Breast epithelium (tissue), 4 donors: ENCODE measurements at regions of chr1 and their contacts with region 1.

Region 1: DNA sequence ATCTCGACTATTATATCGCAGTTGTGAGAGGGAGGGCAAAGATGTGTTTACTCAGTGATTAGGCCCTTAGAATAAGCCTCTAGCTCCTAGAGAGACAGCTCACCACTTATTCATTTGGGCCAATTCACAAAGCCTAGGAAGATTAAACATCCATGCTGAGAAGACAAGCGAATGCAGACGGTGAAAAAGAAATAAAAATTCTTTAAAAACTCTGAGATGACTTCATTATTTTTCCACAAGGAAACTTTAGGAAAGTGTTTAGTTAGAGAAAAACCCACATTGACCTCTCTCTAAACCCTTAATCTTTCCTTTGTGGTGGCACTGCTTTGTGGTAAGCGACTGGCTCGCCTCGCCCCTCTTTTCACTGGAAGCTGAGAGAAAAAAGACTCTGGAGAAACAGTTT is 146.8 kb upstream of the DMRTA2 start:
- DNase-seq: no peak
- H3K4me3 ChIP-seq: no peak overlapping the region
- H3K27ac ChIP-seq: no peak overlapping the region
- H3K4me1 ChIP-seq: no peaks in the 10 kb centered on the region
- H3K27me3 ChIP-seq: no peaks in the 10 kb centered on the region
- CTCF ChIP-seq: no peak
- POLR2A ChIP-seq: no peak

Region 2: DNA sequence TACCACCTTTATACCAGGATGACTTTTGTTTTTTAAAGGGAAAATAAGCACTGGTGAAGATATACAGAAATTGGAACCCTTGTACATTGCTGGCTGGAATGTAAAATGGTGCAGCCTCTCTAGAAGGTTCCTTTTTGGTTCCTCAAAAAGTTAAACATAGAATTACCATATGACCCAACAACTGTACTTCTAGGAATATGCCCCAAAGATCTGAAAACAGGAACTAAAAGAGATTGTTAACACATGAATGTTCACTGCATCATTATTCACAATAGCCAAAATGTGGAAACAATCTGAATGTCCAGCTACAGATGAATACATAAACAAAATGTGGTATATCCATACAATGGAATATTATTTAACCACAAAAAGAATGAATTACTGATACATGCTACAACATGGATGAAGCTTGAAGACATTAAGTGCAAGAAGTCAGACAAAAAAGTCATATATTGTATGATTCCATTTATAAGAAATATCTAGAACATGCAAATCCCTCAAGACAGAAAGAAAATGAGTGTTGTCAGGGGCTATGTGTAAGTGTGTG is 62.0 kb before region 1 on chr1:
- intact Hi-C with region 1: loop called (anchors 2 kb)
- DNase-seq: no peak
- H3K4me3 ChIP-seq: no peak overlapping the region
- H3K27ac ChIP-seq: no peak overlapping the region
- H3K4me1 ChIP-seq: no peaks in the 10 kb centered on the region
- H3K27me3 ChIP-seq: no peaks in the 10 kb centered on the region
- CTCF ChIP-seq: no peak
- POLR2A ChIP-seq: no peak

Region 3: GRCh38 chr1:50527249-50527986 is 42.6 kb before region 1 on chr1:
- intact Hi-C with region 1: no loop called
- DNase-seq: no peak
- H3K4me3 ChIP-seq: no peak overlapping the region
- H3K27ac ChIP-seq: no peak overlapping the region
- H3K4me1 ChIP-seq: no peaks in the 10 kb centered on the region
- H3K27me3 ChIP-seq: no peaks in the 10 kb centered on the region
- CTCF ChIP-seq: no peak
- POLR2A ChIP-seq: no peak